ENCODE measurements at regions of chr19 and their contacts with region 1.

Region 1: GRCh38 chr19:2636897-2637683 is 65.4 kb downstream of the GNG7 start:
- DNase-seq: peak; percentile 78
- H3K4me3 Mint-ChIP-seq: no peak overlapping the region
- H3K27ac Mint-ChIP-seq: no peak overlapping the region
- H3K4me1 Mint-ChIP-seq: peaks cover 2% of the 10 kb centered on the region
- H3K27me3 Mint-ChIP-seq: peaks cover 6% of the 10 kb centered on the region

Region 2: GRCh38 chr19:2427429-2428320 is 209.4 kb before region 1 on chr19 and contains the start of gene TIMM13:
- CTCF ChIA-PET with region 1: interaction called, 10 read pairs
- POLR2A ChIA-PET with region 1: no interaction called
- DNase-seq: peak; percentile 97
- H3K4me3 Mint-ChIP-seq: peak within 1 kb of the TSS; percentile 84
- H3K27ac Mint-ChIP-seq: peak within 1 kb of the TSS; percentile 85
- H3K4me1 Mint-ChIP-seq: peaks cover 17% of the 10 kb centered on the region
- H3K27me3 Mint-ChIP-seq: no peaks in the 10 kb centered on the region
- total RNA-seq, gene TIMM13: 44.5 to 47.4 TPM

Region 3: DNA sequence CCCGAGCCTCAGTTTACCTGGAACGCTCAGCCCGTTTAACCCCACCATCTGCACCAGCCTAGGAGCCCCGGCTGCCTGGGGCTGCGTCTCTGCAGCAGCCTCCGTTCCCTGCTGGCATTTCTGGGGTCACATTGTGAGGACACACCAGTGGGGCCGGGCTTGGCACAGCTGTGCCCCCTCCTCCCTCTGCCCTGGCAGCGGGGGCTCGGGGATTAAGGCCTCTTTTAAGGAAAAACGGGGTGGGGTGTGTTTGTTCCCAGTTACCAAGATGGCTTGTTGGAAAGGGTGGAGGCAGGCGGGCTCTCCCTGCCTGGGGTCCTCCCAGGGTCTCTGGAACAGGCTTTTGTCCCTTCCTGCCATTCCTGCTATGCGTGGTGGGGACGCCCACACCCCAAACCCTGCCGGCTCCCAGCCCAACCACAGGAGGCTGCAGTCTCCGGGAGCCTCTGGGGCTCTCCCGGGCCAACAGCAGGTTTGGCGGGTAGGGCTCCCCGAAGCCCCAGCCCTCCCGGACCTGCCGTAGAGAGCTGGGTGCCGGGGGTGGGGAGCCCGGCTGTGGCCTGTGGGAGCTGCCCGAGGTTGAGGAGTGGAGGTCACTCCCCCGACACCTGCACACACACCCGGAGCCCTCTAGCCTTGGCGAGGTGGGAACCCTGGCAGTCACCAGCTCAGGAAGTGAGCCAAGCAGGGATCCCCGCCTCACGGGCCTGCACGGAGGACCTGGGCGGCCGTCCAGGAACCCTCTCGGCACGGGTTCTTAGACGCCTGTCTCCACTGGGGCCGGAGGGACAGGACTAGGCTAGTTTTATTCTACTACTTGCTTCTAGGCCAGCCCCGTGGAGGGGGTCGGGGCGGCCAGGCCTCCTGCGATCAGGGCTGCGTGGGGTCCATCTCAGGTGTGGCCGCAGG is 124.3 kb before region 1 on chr19:
- CTCF ChIA-PET with region 1: no interaction called
- POLR2A ChIA-PET with region 1: no interaction called
- DNase-seq: no peak
- H3K4me3 Mint-ChIP-seq: no peak overlapping the region
- H3K27ac Mint-ChIP-seq: no peak overlapping the region
- H3K4me1 Mint-ChIP-seq: peaks cover 7% of the 10 kb centered on the region
- H3K27me3 Mint-ChIP-seq: no peaks in the 10 kb centered on the region

Region 4: GRCh38 chr19:2602391-2603181 is 34.5 kb before region 1 on chr19:
- CTCF ChIA-PET with region 1: interaction called, 10 read pairs
- POLR2A ChIA-PET with region 1: no interaction called
- DNase-seq: no peak
- H3K4me3 Mint-ChIP-seq: no peak overlapping the region
- H3K27ac Mint-ChIP-seq: no peak overlapping the region
- H3K4me1 Mint-ChIP-seq: peaks cover 14% of the 10 kb centered on the region
- H3K27me3 Mint-ChIP-seq: peaks cover 8% of the 10 kb centered on the region

Region 5: GRCh38 chr19:2618611-2619010 is 18.5 kb before region 1 on chr19:
- CTCF ChIA-PET with region 1: interaction called, 38 read pairs
- POLR2A ChIA-PET with region 1: interaction called, 16 read pairs
- DNase-seq: peak; percentile 74
- H3K4me3 Mint-ChIP-seq: peak overlapping the region; percentile 60
- H3K27ac Mint-ChIP-seq: peak overlapping the region; percentile 87
- H3K4me1 Mint-ChIP-seq: peaks cover 66% of the 10 kb centered on the region
- H3K27me3 Mint-ChIP-seq: no peaks in the 10 kb centered on the region

Region 6: DNA sequence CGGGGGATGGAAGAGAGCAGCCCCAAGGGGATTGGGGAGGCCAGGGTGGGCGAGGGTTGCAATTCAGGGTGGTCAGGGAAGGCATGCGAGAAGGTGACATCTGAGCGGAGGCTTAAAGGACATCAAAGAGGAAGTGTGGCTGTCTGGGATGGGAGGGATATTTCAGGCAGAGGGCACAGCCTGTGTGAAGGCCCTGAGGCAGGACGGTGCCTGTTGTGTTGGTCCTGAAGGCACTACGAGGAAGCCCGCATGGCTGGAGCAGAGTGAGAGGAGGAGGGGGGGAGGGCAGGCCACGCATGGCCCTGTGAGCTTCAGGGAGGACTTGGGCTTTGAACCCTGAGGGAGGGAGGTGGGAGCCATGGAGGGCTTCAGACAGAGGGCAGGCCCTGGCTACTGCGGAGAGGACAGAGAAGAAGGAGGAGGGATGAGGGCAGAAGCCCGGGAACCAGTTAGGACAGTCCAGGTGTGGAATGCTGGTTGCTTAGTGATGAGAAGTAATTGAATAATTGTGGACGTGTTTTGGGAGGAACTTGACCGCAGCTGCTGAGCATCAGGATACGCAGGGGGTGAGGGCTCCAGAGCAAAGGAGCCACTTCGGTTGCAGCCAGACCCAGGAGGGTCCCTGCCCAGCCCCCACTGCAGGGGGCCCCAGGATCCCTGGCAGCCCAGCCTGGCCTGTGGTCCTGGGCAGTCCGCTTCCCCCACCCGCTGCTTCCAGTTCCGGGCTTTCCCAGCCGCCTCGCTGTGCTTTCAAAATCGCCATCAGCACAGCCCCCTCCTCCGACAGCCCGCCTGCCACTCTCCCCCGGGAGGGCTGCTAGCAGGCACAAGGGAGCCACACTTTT is 346.5 kb after region 1 on chr19:
- CTCF ChIA-PET with region 1: no interaction called
- POLR2A ChIA-PET with region 1: no interaction called
- DNase-seq: no peak
- H3K4me3 Mint-ChIP-seq: no peak overlapping the region
- H3K27ac Mint-ChIP-seq: no peak overlapping the region
- H3K4me1 Mint-ChIP-seq: no peaks in the 10 kb centered on the region
- H3K27me3 Mint-ChIP-seq: peaks cover 17% of the 10 kb centered on the region

Measured in activated CD4-positive, alpha-beta memory T cell treated with anti-CD3 and anti-CD28 coated beads, Interleukin-2, amount 10 ng/mL, durations not matched to agents 7 days and 5 days (primary cell).